A673 (cell line): ENCODE measurements at regions of chr1 and their contacts with region 1.

Region 1: GRCh38 chr1:155323798-155324610 is 3.3 kb downstream of the RUSC1 start:
- DNase-seq: peak; percentile 98
- H3K4me3 ChIP-seq: peak overlapping the region; percentile 68
- H3K27ac ChIP-seq: peak overlapping the region; percentile 78
- H3K4me1 ChIP-seq: peaks cover 27% of the 10 kb centered on the region
- H3K27me3 ChIP-seq: no peaks in the 10 kb centered on the region
- CTCF ChIP-seq: no peak

Region 2: DNA sequence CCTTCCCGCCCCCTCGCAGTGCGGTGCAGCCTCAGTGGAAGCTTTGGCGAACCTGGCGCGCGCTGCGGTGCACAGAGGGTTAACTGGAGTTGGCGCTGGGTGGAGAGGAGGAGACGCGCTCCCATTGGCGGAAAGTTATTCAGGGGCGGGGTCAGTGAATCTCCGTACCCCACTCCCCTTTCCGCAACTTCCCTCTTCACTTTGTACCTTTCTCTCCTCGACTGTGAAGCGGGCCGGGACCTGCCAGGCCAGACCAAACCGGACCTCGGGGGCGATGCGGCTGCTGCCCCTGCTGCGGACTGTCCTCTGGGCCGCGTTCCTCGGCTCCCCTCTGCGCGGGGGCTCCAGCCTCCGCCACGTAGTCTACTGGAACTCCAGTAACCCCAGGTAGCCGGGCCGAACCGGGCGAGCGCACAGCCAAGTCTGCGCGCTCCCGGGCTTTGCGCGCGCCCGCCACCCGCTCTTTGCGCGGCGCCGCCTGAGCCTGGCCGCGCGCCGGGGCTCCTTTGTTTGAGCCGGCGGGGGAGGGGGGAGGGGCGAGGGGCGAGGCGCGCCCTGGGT is 260.4 kb before region 1 on chr1 and contains the start of gene EFNA4:
- CTCF ChIA-PET with region 1: no interaction called
- POLR2A ChIA-PET with region 1: no interaction called
- intact Hi-C with region 1: no loop called
- DNase-seq: peak; percentile 96
- H3K4me3 ChIP-seq: peak within 1 kb of the TSS; percentile 81
- H3K27ac ChIP-seq: peak within 1 kb of the TSS; percentile 89
- H3K4me1 ChIP-seq: peaks cover 31% of the 10 kb centered on the region
- H3K27me3 ChIP-seq: no peaks in the 10 kb centered on the region
- CTCF ChIP-seq: no peak
- total RNA-seq, gene EFNA4: 17.0 and 18.8 TPM in 2 replicates

Region 3: DNA sequence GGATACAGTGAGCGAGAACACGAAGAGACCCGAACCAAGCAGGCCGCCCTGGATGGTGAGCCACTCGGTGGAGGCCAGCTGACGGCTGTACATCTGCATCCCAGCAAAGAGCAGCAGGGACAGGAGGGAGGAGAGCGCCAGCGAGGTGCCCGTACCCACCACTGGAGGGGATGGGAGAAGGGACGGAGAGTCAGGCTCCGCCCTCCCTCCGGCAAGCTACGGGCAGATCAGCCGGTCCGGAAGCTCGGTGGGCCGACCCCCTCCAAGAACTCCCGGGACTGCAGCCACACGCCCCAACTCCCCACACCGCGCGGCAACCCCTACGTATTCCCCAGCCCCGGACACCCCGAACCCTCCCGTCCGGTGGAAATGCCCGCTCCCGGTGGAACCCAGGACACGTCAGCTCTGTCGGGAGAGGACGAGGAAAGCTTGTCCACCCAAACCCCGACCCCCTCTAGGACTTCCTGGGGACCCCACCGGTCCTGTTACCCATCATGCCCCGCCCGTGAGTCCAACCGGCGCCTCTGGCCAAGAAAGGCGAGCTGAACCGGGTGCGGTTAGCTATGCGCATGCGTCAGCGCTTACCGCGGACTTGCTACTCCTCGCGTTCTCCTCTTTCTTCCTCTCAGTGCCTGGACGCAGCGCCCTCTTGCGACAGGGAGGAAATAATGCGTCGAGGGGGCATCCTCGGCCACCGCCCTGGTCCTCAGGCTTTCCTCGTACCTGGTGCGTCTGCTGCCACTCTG is 151.1 kb before region 1 on chr1 and contains the start of gene KRTCAP2:
- CTCF ChIA-PET with region 1: no interaction called
- POLR2A ChIA-PET with region 1: no interaction called
- intact Hi-C with region 1: loop called (anchors 10 kb)
- DNase-seq: peak; percentile 97
- H3K4me3 ChIP-seq: peak within 1 kb of the TSS; percentile 86
- H3K27ac ChIP-seq: peak within 1 kb of the TSS; percentile 90
- H3K4me1 ChIP-seq: peaks cover 24% of the 10 kb centered on the region
- H3K27me3 ChIP-seq: no peaks in the 10 kb centered on the region
- CTCF ChIP-seq: peak; percentile 99
- total RNA-seq, gene KRTCAP2: 162 and 179 TPM in 2 replicates

Region 4: DNA sequence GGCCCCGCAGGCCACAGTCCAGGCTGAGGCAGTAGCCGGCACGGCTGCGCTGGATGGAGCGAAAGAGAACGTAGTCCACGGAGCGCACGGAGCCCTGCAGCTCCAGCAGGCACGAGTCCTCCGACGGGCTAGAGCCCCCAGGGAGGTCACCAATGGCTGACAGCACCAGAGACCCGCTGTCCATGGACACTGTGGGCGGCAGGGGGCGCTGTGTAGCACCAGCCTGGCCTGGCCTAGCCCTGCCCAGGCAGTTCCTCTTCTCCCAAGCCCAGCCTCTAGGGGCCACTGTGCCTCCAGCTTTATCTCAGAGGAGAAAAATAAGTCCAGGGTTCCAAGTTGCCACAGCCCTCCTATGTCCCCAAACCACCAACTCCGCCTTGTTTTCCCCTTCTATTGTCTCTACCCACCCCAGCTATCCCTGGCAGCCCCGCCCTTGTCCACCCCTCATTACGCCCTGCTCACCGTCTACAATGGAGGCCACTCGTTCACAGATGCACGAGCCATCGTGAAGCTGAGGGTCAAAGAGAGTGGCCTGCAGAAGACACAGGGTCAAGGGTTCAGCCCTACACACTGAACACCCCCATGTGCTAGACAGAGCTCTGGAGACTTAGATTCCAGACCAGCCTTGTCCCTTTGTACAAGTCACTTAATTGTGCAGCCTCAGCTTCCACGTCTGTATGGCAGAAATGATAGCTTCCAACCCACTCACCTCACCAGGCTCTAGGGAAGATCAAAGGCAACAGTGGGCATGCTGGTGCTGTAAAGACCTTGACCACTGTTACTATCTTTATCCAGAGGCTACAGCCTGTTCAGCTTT is 73.2 kb before region 1 on chr1:
- CTCF ChIA-PET with region 1: interaction called, 28 read pairs
- POLR2A ChIA-PET with region 1: no interaction called
- intact Hi-C with region 1: loop called (anchors 1 kb)
- DNase-seq: peak; percentile 98
- H3K4me3 ChIP-seq: peak overlapping the region; percentile 42
- H3K27ac ChIP-seq: peak overlapping the region; percentile 80
- H3K4me1 ChIP-seq: peaks cover 23% of the 10 kb centered on the region
- H3K27me3 ChIP-seq: no peaks in the 10 kb centered on the region
- CTCF ChIP-seq: peak; percentile 100

Region 5: GRCh38 chr1:155295183-155295941 is 28.6 kb before region 1 on chr1:
- CTCF ChIA-PET with region 1: interaction called, 11 read pairs
- POLR2A ChIA-PET with region 1: no interaction called
- intact Hi-C with region 1: no loop called
- DNase-seq: no peak
- H3K4me3 ChIP-seq: no peak overlapping the region
- H3K27ac ChIP-seq: no peak overlapping the region
- H3K4me1 ChIP-seq: no peaks in the 10 kb centered on the region
- H3K27me3 ChIP-seq: peaks cover 22% of the 10 kb centered on the region
- CTCF ChIP-seq: no peak

Region 6: GRCh38 chr1:155360051-155360450 is 36.0 kb after region 1 on chr1:
- CTCF ChIA-PET with region 1: no interaction called
- POLR2A ChIA-PET with region 1: no interaction called
- intact Hi-C with region 1: no loop called
- DNase-seq: no peak
- H3K4me3 ChIP-seq: no peak overlapping the region
- H3K27ac ChIP-seq: no peak overlapping the region
- H3K4me1 ChIP-seq: no peaks in the 10 kb centered on the region
- H3K27me3 ChIP-seq: no peaks in the 10 kb centered on the region
- CTCF ChIP-seq: no peak

Region 7: DNA sequence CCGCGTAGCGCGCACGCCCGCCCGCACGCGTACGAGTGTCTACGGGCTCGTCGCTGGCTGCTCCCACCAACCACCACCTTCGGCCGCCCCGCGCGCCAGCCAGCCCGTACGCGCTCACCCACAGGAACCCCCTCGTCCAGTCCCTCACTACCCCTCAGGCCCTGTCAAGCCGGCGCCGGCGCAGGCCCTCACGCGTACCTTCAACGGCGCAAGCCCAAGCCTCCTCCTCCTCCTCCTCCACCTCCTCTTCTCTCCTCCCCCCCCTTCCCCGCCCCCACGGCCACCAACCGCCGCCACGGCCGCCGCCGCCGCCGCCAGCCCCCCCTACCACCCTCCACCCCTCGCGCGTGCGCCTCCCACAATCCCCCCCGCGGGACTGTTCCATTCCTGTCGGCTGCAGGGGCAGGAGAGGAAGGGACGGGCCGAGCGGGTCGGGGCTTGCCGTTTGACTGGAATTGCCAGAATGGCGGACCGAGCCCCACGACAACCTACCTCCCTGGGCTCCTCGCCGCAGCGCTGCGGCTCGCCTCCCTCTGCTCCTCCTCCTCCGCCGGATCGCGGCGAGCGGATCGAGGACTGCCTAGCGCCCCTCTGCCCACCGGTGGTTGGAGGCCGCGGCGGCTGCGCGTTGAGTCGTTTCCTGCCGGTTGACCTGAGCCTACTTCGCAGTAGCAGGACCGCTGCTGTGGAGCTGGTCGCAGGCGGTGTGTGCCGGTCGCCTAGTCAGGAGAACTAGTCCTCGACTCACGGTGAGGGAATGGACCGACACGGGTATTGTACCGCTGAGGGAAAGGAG is 238.8 kb after region 1 on chr1 and contains the start of gene ASH1L:
- CTCF ChIA-PET with region 1: no interaction called
- POLR2A ChIA-PET with region 1: no interaction called
- intact Hi-C with region 1: loop called (anchors 10 kb)
- DNase-seq: peak; percentile 97
- H3K4me3 ChIP-seq: peak within 1 kb of the TSS; percentile 87
- H3K27ac ChIP-seq: peak within 1 kb of the TSS; percentile 100
- H3K4me1 ChIP-seq: peaks cover 13% of the 10 kb centered on the region
- H3K27me3 ChIP-seq: no peaks in the 10 kb centered on the region
- CTCF ChIP-seq: no peak
- total RNA-seq, gene ASH1L: 47.5 and 49.6 TPM in 2 replicates